Caco-2 (cell line): ENCODE measurements at regions of chr1 and their contacts with region 1.

Region 1: DNA sequence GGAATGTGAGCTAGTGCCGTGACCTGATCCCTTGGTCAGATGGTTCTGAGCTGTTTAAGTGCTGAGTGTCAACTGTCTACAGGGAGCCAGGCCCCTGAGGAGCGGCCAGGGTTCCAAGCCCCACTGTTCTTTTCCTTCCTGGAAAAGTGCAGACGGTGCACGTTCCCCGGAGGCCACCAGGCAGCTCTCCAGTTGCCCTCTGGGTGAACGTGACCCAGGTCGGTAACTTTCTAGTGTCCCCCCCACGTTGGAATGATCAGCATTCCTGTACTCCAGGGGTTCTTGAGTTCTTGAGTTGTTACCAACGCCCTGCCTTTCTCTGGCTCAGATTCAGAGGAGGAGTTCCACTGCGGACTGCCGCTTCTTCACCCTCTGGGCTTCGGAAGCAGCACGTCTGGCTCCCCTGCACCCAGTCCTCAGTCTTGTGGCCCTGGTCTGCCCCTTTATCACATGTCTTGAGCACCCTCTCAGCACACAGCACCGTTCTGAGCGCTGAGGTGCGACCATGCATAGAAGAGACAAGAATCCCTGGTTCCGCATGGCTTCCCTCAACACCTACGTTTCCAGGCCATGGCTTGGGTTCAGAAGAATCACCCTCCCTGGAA is 131.5 kb downstream of the DHRS3 start:
- DNase-seq: peak in 1 of 2 experiments; percentile 49
- H3K4me3 ChIP-seq: no peak overlapping the region
- H3K4me3 Mint-ChIP-seq: no peak overlapping the region
- H3K27ac Mint-ChIP-seq: peak overlapping the region; percentile 61
- H3K4me1 ChIP-seq: peaks cover 35% of the 10 kb centered on the region
- H3K4me1 Mint-ChIP-seq: peaks cover 28% of the 10 kb centered on the region
- H3K27me3 ChIP-seq: no peaks in the 10 kb centered on the region
- H3K27me3 Mint-ChIP-seq: no peaks in the 10 kb centered on the region
- CTCF ChIP-seq: no peak

Region 2: DNA sequence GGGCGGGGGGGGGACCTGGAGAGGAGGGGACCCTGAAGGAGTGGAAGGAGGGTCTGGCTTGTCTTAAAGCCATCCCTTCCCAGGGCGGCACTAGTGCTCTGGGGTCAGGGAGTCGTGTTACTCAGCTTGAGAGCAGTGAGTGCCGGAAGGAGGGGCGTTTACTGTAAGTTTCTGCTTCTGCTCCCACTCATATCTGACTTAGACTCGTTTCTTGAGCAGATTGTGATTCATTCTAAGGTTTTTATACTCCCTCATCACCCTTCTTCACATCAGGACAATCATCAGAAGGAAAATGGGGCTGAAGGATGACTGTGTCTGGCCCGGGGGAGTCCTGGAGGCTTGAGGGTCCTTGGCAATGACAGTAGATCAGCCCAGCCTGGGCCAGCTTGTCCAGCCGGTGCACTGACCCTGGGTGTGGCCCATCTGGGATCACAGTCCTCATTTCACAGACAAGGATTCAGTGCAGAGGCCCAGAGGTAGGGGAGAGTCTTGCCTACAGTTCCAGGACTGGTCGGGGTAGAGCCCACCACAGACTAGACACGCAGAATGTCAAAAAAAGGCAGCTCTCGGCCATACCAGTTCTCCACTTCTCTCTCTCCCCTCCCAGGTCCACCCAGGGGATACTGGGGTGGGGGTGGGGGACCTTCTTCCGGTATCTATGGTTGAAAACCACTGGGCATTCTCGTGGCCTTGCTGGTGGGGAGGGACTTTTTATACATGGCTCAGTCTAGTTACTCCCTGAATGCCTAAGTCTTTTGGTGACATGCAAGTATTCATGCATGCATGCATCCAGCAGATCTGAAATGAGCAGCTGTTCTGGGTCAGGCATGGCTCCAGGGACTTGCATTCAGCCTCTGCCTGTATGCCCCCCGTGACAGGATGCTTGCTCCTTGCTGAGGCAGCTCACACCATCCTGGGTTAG is 418.3 kb before region 1 on chr1:
- CTCF ChIA-PET with region 1: no interaction called
- POLR2A ChIA-PET with region 1: no interaction called
- intact Hi-C with region 1: no loop called
- DNase-seq: no peak
- H3K4me3 ChIP-seq: no peak overlapping the region
- H3K4me3 Mint-ChIP-seq: no peak overlapping the region
- H3K27ac Mint-ChIP-seq: no peak overlapping the region
- H3K4me1 ChIP-seq: peaks cover 5% of the 10 kb centered on the region
- H3K4me1 Mint-ChIP-seq: no peaks in the 10 kb centered on the region
- H3K27me3 ChIP-seq: no peaks in the 10 kb centered on the region; the same call in 1 of the 2 replicates
- H3K27me3 Mint-ChIP-seq: peaks cover 17% of the 10 kb centered on the region
- CTCF ChIP-seq: no peak

Region 3: GRCh38 chr1:12464598-12465056 is 21.9 kb before region 1 on chr1:
- CTCF ChIA-PET with region 1: interaction called, 8 read pairs
- POLR2A ChIA-PET with region 1: no interaction called
- intact Hi-C with region 1: loop called (anchors 2 kb)
- DNase-seq: no peak
- H3K4me3 ChIP-seq: no peak overlapping the region
- H3K4me3 Mint-ChIP-seq: peak overlapping the region; percentile 43
- H3K27ac Mint-ChIP-seq: peak overlapping the region; percentile 75
- H3K4me1 ChIP-seq: peaks cover 38% of the 10 kb centered on the region
- H3K4me1 Mint-ChIP-seq: peaks cover 39% of the 10 kb centered on the region
- H3K27me3 ChIP-seq: no peaks in the 10 kb centered on the region
- H3K27me3 Mint-ChIP-seq: no peaks in the 10 kb centered on the region
- CTCF ChIP-seq: no peak

Region 4: DNA sequence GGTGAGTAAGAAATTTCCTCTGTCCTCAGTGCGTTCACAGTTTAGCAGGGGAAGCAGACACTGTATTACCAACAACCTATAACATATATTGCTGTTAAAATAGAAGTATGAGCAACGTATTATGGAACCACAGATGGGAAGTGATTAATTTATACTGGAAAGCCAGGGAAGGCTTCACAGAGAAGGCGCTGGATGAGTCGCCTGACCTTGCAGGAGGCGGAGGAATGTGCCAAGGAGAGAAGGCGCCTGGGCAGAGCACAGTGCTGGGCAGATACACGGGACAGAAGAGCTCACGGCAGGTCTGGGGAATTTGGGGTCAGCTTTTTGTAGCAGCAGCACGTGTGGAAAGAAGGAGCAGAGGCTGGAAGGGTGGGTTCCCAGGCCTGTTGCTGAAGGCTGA is 15.2 kb after region 1 on chr1:
- CTCF ChIA-PET with region 1: no interaction called
- POLR2A ChIA-PET with region 1: no interaction called
- intact Hi-C with region 1: no loop called
- DNase-seq: no peak
- H3K4me3 ChIP-seq: no peak overlapping the region
- H3K4me3 Mint-ChIP-seq: no peak overlapping the region
- H3K27ac Mint-ChIP-seq: no peak overlapping the region
- H3K4me1 ChIP-seq: no peaks in the 10 kb centered on the region
- H3K4me1 Mint-ChIP-seq: no peaks in the 10 kb centered on the region
- H3K27me3 ChIP-seq: no peaks in the 10 kb centered on the region
- H3K27me3 Mint-ChIP-seq: no peaks in the 10 kb centered on the region
- CTCF ChIP-seq: no peak

Region 5: GRCh38 chr1:12636098-12636950 is 149.8 kb after region 1 on chr1:
- CTCF ChIA-PET with region 1: no interaction called
- POLR2A ChIA-PET with region 1: no interaction called
- intact Hi-C with region 1: no loop called
- DNase-seq: peak; percentile 16 to 51
- H3K4me3 ChIP-seq: no peak overlapping the region
- H3K4me3 Mint-ChIP-seq: no peak overlapping the region
- H3K27ac Mint-ChIP-seq: no peak overlapping the region
- H3K4me1 ChIP-seq: peaks cover 8% of the 10 kb centered on the region
- H3K4me1 Mint-ChIP-seq: no peaks in the 10 kb centered on the region
- H3K27me3 ChIP-seq: no peaks in the 10 kb centered on the region
- H3K27me3 Mint-ChIP-seq: no peaks in the 10 kb centered on the region
- CTCF ChIP-seq: no peak